Activated T-helper 2 cell treated with anti-CD3 and anti-CD28 coated beads, Interferon-gamma antibody, Interleukin-2, Interleukin-4, amounts not matched to agents 10 μg/mL and 5 μg/mL and 100 μg/mL, durations not matched to agents 14 hours and 24 hours and 36 hours (primary cell): ENCODE measurements at regions of chr6 and their contacts with region 1.

Region 1: DNA sequence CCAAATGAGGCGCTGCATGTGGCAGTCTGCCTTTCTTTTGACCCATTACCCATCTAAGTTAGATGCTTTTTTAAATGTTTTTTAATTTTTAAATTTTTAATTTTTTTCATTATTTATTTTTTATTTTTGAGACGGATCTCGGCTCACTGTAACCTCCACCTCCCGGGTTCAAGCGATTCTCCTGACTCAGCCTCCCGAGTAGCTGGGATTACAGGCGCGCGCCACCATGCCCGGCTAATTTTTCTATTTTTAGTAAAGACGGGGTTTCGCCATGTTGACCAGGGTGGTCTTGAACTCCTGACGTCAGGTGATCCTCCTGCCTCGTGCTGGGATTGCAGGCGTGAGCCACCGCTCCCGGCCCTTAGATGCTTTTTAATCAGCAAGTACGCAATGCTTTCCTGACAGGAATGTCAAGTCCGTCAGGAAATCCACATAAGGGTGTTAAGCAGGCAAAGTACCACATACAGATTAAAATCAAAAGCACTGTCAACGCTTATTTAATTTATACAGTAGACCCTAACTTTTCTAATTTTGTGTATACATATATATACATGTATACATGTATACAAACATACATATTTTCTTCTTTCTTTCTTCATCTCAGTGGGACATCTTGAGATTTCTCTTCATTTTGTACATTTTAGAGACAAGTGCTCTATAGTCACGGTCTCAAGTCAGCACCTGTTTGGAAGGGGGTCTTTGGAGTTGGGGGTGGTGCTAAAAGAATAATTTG is 995 bp upstream of the GSTA4 start:
- DNase-seq: peak; percentile 23
- H3K4me3 Mint-ChIP-seq: peak overlapping the region; percentile 90
- H3K27ac Mint-ChIP-seq: peak overlapping the region; percentile 90
- H3K4me1 Mint-ChIP-seq: peaks cover 30% of the 10 kb centered on the region
- H3K27me3 Mint-ChIP-seq: peaks cover 8% of the 10 kb centered on the region

Region 2: DNA sequence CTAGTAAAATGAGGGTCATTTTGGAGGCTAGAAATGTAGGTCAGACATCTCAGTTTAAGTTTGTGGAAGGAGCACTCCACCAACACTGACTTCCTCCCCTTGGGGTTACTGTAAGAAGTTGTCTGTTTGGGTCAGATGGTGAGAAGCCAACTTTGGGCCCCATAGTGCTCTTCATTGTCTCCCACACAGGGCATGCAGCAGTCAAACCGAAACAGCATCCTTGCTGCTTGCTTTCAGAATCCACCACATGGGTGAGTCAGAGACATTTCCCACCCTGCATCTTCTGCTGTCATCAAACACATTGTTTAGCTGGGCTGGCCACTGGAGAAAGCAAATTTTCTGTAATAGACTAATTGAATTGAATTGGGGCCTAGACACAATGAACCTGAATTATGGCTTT is 768.6 kb before region 1 on chr6:
- intact Hi-C with region 1: loop called (anchors 10 kb)
- DNase-seq: peak; percentile 71
- H3K4me3 Mint-ChIP-seq: no peak overlapping the region
- H3K27ac Mint-ChIP-seq: no peak overlapping the region
- H3K4me1 Mint-ChIP-seq: peaks cover 37% of the 10 kb centered on the region
- H3K27me3 Mint-ChIP-seq: peaks cover 60% of the 10 kb centered on the region

Region 3: DNA sequence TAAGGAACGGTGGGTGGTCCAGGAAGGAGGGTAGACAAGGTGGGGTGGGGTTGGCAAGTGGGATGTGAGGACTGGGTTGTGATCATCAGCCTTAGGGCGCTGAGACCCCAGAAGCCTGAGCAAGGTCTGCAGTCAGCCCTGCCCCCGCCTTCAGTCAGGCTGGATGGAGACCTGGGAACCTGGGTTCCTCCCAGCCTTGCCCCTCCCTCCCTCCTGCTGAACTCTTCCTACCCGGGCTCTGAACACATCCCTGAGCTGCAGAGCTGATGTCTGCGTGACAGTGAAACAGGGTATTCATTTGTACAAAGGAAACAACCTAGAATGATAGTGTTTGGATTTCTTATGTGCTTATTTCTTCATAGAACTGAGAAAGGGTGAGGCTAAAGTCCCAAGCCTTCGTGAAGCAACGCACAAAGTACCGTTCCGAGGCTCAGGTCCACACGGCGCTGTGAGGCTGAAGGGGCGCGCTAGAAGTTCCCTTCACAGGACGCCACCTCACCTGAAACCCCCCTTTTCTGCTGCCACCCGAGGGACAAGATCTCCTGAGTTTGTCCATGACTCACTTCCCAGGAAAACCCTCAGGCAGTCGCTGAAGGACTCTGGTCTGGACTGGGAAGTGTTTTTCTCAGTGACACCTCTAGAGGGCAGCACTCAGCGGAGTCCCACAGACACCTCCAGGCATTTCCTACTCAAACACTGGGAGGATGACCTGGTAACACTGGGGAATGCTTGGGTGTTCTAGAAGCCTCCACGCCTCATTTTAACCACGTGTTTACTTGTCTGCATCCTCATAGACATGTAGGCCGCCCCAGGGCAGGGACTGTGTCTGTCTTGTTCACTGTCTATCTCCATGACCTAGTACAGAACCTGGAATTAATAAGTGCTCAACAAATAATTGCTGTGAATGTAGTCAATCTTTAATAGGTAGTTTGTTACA is 156.7 kb before region 1 on chr6:
- intact Hi-C with region 1: loop called (anchors 1 kb)
- DNase-seq: peak; percentile 22
- H3K4me3 Mint-ChIP-seq: no peak overlapping the region
- H3K27ac Mint-ChIP-seq: no peak overlapping the region
- H3K4me1 Mint-ChIP-seq: no peaks in the 10 kb centered on the region
- H3K27me3 Mint-ChIP-seq: peaks cover 40% of the 10 kb centered on the region

Region 4: DNA sequence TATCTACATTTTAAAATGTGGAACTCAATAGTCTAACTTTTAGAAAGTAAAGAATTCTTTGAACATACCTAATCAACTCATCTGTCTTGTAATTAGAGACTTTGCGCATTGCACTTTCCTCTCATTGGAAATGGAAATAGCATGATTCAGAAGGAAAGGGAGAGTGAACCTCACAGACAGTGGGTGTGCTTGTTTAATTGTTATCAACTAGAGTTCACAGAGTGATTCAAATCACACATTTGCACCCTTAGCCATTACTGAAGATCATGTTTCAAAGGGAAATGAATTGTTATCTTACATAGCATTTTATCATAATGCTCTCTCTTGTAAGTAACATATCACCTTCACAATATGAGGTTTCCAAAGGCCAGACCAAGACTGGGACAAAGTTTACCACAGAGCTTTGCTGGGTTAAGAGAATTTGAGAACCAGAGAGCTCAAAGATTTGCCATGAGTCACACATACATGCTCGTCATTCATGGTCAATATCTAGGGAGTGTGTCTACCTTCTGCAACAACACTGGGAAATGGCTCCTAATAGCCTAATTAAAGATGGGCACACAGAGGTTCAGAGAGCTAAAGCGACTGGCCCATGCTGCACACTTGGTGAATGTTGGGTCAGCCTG is 108.1 kb before region 1 on chr6:
- intact Hi-C with region 1: loop called (anchors 1 kb)
- DNase-seq: no peak
- H3K4me3 Mint-ChIP-seq: no peak overlapping the region
- H3K27ac Mint-ChIP-seq: peak overlapping the region; percentile 82
- H3K4me1 Mint-ChIP-seq: peaks cover 41% of the 10 kb centered on the region
- H3K27me3 Mint-ChIP-seq: no peaks in the 10 kb centered on the region

Region 5: DNA sequence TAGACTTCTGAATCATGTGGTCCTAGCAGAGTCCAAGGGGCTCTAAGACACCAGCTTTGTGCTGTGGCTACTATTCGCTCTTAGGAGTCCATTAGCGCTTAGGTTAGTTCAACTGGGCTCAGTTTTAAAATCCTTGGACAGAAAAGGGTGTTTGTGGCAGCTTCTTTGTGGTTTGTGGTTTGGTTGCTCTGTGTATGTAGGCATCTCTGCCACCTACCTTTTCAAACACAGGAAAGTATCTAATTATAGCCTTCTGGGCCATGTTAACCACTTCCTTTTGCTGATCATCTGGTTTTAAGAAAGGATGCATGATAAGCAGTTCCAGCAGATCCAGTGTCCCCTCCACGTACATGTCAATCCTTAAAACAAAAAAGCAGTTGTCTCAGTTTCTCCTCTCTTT is 11.8 kb before region 1 on chr6:
- intact Hi-C with region 1: loop called (anchors 1 kb)
- DNase-seq: peak; percentile 43
- H3K4me3 Mint-ChIP-seq: peak overlapping the region; percentile 37
- H3K27ac Mint-ChIP-seq: peak overlapping the region; percentile 90
- H3K4me1 Mint-ChIP-seq: peaks cover 73% of the 10 kb centered on the region
- H3K27me3 Mint-ChIP-seq: no peaks in the 10 kb centered on the region

Region 6: GRCh38 chr6:53064726-53065215 is 68.7 kb after region 1 on chr6:
- intact Hi-C with region 1: loop called (anchors 1 kb)
- DNase-seq: peak; percentile 92
- H3K4me3 Mint-ChIP-seq: peak overlapping the region; percentile 99
- H3K27ac Mint-ChIP-seq: peak overlapping the region; percentile 99
- H3K4me1 Mint-ChIP-seq: peaks cover 49% of the 10 kb centered on the region
- H3K27me3 Mint-ChIP-seq: no peaks in the 10 kb centered on the region